ENCODE measurements at regions of chr2 and their contacts with region 1.

Region 1: DNA sequence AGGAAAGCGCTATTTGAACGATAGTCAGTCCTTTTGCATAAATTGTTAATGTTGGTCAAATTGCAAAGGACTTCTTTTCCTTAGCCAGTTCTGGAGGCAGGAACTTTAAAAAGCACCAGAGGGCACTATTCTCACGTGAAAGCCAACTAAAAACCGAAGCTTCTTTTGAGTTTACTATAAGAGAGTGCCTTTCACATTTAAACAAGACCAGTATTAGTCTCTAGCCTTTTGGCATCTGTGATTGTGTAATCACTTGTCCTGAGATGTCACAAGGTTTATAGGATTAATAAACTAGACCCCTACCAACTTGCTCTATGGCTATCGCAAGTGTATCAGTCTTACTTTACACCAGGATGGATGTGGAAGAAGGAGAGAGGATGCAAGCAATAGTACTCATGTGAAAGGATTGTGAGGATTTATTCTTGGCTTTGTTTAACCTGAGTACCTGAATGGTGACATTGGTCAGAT is 14.4 kb upstream of the STAT4 start:
- DNase-seq: peak in 2 of 5 donors; percentile 36 to 42
- H3K4me3 ChIP-seq: no peak overlapping the region
- H3K4me3 Mint-ChIP-seq: no peak overlapping the region
- H3K27ac ChIP-seq: no peak overlapping the region
- H3K27ac Mint-ChIP-seq: no peak overlapping the region
- H3K4me1 ChIP-seq: peaks cover 4% of the 10 kb centered on the region
- H3K4me1 Mint-ChIP-seq: peaks cover 3 to 6% (median 6%) of the 10 kb centered on the region in 3 donors
- H3K27me3 ChIP-seq: no peaks in the 10 kb centered on the region
- H3K27me3 Mint-ChIP-seq: peaks cover 3 to 10% of the 10 kb centered on the region in 2 donors

Region 2: GRCh38 chr2:190970873-190971506 is 194.2 kb before region 1 on chr2:
- CTCF ChIA-PET with region 1: no interaction called
- POLR2A ChIA-PET with region 1: no interaction called
- DNase-seq: no peak
- H3K4me3 ChIP-seq: no peak overlapping the region
- H3K4me3 Mint-ChIP-seq: no peak overlapping the region
- H3K27ac ChIP-seq: no peak overlapping the region
- H3K27ac Mint-ChIP-seq: peak overlapping the region in 7 of 8 donors; percentile 56 to 92 (median 75)
- H3K4me1 ChIP-seq: no peaks in the 10 kb centered on the region
- H3K4me1 Mint-ChIP-seq: peaks cover 0 to 27% (median 25%) of the 10 kb centered on the region in 3 donors
- H3K27me3 ChIP-seq: no peaks in the 10 kb centered on the region
- H3K27me3 Mint-ChIP-seq: peaks cover 0 to 2% of the 10 kb centered on the region in 2 donors

Region 3: DNA sequence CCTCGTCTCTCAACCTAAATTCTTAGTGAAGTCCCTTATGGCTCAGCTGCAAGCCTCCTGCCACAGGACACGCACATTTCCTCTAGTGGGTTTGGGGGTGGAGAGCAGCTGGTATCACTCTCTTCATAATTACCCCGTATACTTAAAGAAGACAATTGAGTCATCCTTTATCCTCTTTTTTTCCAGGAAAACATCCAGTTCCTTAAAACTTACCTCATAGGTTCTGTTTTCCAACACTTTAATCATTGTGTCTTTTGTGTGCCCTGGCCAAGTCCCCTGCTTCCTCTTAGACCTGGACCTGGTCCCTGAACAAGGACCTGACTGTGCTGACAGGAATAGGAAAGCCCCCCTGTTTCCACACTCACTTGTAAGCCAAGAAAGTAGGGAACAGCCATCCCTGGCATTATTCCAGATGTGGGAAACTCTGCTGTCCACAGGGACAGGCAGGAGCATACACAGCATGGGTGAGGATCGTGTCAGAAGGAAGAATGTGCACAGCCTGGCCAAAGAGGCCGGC is 37.7 kb after region 1 on chr2:
- CTCF ChIA-PET with region 1: interaction called, 12 read pairs
- POLR2A ChIA-PET with region 1: no interaction called
- DNase-seq: peak in 4 of 5 donors; percentile 6 to 57 (median 18)
- H3K4me3 ChIP-seq: peak overlapping the region; percentile 26
- H3K4me3 Mint-ChIP-seq: peak overlapping the region; percentile 32 to 86 (median 66)
- H3K27ac ChIP-seq: no peak overlapping the region
- H3K27ac Mint-ChIP-seq: peak overlapping the region; percentile 84 to 96 (median 92)
- H3K4me1 ChIP-seq: peaks cover 43% of the 10 kb centered on the region
- H3K4me1 Mint-ChIP-seq: peaks cover 53 to 58% (median 57%) of the 10 kb centered on the region in 3 donors
- H3K27me3 ChIP-seq: no peaks in the 10 kb centered on the region
- H3K27me3 Mint-ChIP-seq: no peaks in the 10 kb centered on the region

Region 4: DNA sequence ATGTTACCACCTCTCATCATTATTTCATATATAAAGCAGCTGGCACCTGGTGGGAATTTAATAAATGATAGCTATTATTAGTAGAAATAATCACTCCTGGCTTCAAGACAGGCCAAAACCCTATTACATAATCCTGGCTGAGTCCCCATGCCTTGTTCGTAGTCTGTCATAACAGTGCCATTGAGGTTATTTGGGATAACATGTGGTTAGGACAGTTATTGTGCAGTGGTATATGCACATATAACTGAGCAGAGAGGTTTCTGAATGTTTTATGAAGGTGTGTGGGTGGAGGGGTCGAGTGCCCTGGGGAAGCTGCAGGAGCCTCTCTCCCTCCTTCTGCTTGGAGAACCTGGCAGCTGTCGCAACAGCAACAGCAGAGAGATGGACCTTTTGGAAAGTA is 350.3 kb after region 1 on chr2:
- CTCF ChIA-PET with region 1: interaction called, 20 read pairs
- POLR2A ChIA-PET with region 1: no interaction called
- DNase-seq: no peak
- H3K4me3 ChIP-seq: no peak overlapping the region
- H3K4me3 Mint-ChIP-seq: no peak overlapping the region
- H3K27ac ChIP-seq: no peak overlapping the region
- H3K27ac Mint-ChIP-seq: no peak overlapping the region
- H3K4me1 ChIP-seq: no peaks in the 10 kb centered on the region
- H3K4me1 Mint-ChIP-seq: no peaks in the 10 kb centered on the region
- H3K27me3 ChIP-seq: no peaks in the 10 kb centered on the region
- H3K27me3 Mint-ChIP-seq: peaks cover 3 to 30% of the 10 kb centered on the region in 2 donors

Region 5: DNA sequence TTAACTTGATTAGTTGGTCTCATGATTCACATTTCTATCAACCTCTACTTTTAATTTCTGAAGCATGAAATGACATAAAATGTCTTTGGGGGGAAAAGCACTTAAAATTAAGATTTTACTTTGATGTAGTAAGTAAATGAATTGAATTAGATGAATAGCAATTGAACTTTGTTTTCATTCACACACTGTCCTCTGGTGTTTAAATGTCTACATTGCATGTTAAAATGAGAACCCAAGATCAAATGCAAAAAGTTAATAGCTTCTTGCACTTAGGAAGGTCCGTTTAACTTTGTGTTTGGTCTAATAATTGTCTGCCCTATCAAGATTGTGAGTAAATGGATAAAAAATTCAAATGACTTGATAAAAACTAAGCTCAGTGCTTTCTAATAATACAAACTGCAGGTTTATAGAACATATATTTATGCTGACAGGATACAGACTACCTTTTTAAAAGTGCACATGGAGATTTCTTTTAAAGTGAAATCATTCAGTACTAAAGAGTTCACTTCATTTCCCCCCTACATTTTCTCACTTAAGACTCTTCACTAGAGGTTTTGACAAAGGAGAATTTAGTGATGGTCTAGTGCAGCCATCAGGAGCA is 356.5 kb after region 1 on chr2:
- CTCF ChIA-PET with region 1: interaction called, 72 read pairs
- POLR2A ChIA-PET with region 1: no interaction called
- DNase-seq: peak in 2 of 5 donors; percentile 7 to 21
- H3K4me3 ChIP-seq: no peak overlapping the region
- H3K4me3 Mint-ChIP-seq: no peak overlapping the region
- H3K27ac ChIP-seq: no peak overlapping the region
- H3K27ac Mint-ChIP-seq: no peak overlapping the region
- H3K4me1 ChIP-seq: no peaks in the 10 kb centered on the region
- H3K4me1 Mint-ChIP-seq: no peaks in the 10 kb centered on the region
- H3K27me3 ChIP-seq: no peaks in the 10 kb centered on the region
- H3K27me3 Mint-ChIP-seq: peaks cover 3 to 25% of the 10 kb centered on the region in 2 donors